ENCODE measurements at regions of chr5 and their contacts with region 1.

Region 1: GRCh38 chr5:140157032-140157803 is 17.8 kb upstream of the CYSTM1 start:
- DNase-seq: peak; percentile 80 to 96 (median 91)

Region 2: GRCh38 chr5:140107312-140108083 is 49.7 kb before region 1 on chr5:
- intact Hi-C with region 1: loop called (anchors 5 kb)
- DNase-seq: peak; percentile 83 to 97 (median 94)

Measured in head of caudate nucleus (tissue), 42 donors.